GM10248 (cell line): ENCODE measurements at regions of chr10 and their contacts with region 1.

Region 1: GRCh38 chr10:31977440-31978155 is 49.0 kb upstream of the ARHGAP12 start:
- DNase-seq: no peak
- CTCF ChIP-seq: no peak

Region 2: GRCh38 chr10:31961277-31962074 is 16.1 kb before region 1 on chr10:
- CTCF ChIA-PET with region 1: interaction called, 13 read pairs
- POLR2A ChIA-PET with region 1: no interaction called
- DNase-seq: peak; percentile 15
- CTCF ChIP-seq: no peak